CD4-positive, alpha-beta T cell (primary cell): ENCODE measurements at regions of chr20 and their contacts with region 1.

Region 1: DNA sequence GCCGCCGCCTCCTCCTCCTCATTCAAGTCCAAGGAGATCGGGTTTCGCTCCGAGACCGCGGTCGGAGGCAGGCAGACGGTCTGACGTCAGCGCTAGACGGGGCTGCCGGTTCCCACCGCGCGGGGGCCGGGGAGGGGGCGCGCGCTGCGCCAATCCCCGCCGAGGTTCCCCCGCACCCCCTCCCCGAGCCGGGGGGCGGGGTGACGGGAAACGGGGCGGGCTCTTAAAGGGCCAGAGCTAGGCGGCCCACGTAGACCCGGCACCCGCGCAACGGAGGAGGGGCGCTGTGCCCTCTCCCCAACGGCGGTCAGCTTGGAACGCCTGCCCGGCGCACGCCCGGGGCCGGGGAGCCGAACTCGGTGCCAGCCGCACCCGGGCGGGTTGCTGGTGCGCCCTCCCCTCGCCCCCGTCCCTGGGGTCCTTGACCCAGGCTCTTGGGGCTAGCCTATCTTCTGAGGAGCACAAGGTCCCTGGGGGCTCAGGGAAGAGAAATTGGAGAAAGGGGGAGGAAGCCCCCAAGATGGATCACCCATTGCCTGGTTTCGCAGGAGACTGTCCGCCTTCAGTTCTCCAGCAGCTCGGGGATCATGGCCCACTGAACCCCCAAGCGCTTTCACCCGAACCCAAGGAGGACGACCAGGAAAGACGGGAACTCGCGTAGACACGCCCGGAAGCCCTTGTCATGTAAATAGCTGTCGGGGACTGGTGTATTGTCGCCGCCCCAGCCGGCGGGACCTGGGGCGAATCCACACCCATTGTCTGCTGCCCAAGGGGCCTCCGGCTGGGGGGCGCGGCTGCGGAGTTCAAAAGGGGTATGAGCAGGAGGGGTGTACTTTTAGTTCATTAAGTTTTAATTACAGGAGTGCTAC is at the start of gene PMEPA1:
- DNase-seq: peak; percentile 85 to 98 (median 94)
- ATAC-seq: peak; percentile 84
- H3K4me3 ChIP-seq: peak within 1 kb of the TSS; percentile 87
- H3K4me3 Mint-ChIP-seq: peak within 1 kb of the TSS; percentile 97
- H3K27ac ChIP-seq: peak within 1 kb of the TSS; percentile 75 to 84
- H3K27ac Mint-ChIP-seq: peak within 1 kb of the TSS; percentile 95
- H3K4me1 ChIP-seq: peaks cover 32% of the 10 kb centered on the region
- H3K4me1 Mint-ChIP-seq: peaks cover 50% of the 10 kb centered on the region
- H3K27me3 ChIP-seq: peaks cover 0 to 3% of the 10 kb centered on the region in 2 experiments
- H3K27me3 Mint-ChIP-seq: no peaks in the 10 kb centered on the region
- CTCF ChIP-seq: peak; percentile 1
- total RNA-seq, gene PMEPA1: 15.7 to 18.0 TPM

Region 2: DNA sequence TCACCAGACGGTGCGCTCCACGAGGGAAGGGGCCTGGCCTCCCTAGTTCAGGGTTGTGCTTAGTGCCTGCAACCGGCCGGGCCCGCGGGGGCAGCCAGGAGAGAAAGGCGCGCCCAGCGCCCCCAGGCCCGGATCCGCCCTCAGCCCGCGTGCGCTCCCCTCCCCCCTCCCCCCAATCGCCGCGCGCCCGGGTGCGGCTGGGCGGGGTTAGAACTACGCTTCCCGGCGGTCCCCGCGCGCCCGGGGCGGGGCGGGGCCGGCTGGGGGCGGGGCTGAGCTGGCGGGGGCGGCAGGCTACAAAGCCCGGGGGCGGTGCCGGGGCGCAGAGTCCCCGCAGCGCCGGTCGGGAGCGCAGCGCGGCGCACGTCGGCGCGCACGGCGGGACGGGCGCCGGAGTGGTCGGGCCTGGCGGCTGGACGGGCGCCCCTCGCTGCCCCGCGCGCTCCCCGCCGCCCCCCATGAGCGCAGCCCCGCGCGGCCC is 319.1 kb before region 1 on chr20 and contains the start of gene RBM38:
- CTCF ChIA-PET with region 1: no interaction called
- POLR2A ChIA-PET with region 1: interaction called, 3 read pairs
- intact Hi-C with region 1: loop called (anchors 5 kb)
- DNase-seq: peak; percentile 55 to 89 (median 72)
- ATAC-seq: peak; percentile 51
- H3K4me3 ChIP-seq: peak within 1 kb of the TSS; percentile 72
- H3K4me3 Mint-ChIP-seq: peak within 1 kb of the TSS; percentile 99
- H3K27ac ChIP-seq: peak within 1 kb of the TSS; percentile 83 to 88
- H3K27ac Mint-ChIP-seq: peak within 1 kb of the TSS; percentile 96
- H3K4me1 ChIP-seq: peaks cover 63% of the 10 kb centered on the region
- H3K4me1 Mint-ChIP-seq: peaks cover 53% of the 10 kb centered on the region
- H3K27me3 ChIP-seq: no peaks in the 10 kb centered on the region
- H3K27me3 Mint-ChIP-seq: peaks cover 6% of the 10 kb centered on the region
- CTCF ChIP-seq: no peak
- total RNA-seq, gene RBM38: 604 to 645 TPM

Region 3: DNA sequence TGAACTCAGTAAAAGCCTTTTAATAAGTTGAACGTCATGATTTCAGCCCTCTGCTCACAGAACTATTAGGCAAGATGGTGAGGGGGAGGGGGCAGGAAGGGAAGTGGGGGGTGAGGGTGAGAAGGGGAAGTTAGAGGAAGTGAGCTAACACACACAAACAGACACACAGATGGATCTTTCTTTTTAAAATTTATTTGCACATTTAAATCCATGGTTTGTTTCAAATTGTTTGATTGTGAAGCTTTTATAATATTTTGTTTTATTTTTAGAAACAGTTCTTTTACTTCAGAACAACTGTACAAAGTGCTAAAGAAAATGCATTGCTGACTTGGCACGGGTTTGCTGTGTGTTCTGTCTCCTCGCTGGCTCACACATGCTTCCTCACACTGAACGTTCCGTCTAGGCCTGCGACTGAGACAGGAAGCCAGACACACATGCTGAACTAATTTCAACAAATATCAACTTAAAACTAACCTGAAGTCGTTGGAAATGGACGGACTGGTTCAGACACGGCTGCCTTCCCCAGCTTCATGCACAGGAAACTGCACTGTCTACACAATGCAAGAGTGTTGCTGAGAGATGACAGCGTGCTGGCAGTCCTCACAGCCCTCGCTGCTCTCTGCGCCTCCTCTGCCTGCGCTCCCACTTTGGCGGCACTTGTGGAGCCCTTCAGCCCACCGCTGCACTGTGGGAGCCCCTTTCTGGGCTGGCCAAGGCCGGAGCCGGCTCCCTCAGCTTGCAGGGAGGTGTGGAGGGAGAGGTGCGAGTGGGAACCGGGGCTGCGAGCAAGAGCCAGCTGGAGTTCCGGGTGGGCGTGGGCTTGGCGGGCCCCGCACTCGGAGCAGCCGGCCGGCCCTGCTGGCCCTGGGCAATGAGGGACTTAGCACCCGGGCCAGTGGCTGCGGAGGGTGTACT is 81.9 kb before region 1 on chr20:
- CTCF ChIA-PET with region 1: no interaction called
- POLR2A ChIA-PET with region 1: interaction called, 29 read pairs
- intact Hi-C with region 1: loop called (anchors 5 kb)
- DNase-seq: peak in 13 of 14 experiments; percentile 43 to 88 (median 62)
- ATAC-seq: peak; percentile 79
- H3K4me3 ChIP-seq: peak overlapping the region; percentile 40
- H3K4me3 Mint-ChIP-seq: peak overlapping the region; percentile 83
- H3K27ac ChIP-seq: peak overlapping the region; percentile 80 to 88
- H3K27ac Mint-ChIP-seq: peak overlapping the region; percentile 94
- H3K4me1 ChIP-seq: peaks cover 43% of the 10 kb centered on the region
- H3K4me1 Mint-ChIP-seq: peaks cover 90% of the 10 kb centered on the region
- H3K27me3 ChIP-seq: no peaks in the 10 kb centered on the region
- H3K27me3 Mint-ChIP-seq: no peaks in the 10 kb centered on the region
- CTCF ChIP-seq: no peak

Region 4: DNA sequence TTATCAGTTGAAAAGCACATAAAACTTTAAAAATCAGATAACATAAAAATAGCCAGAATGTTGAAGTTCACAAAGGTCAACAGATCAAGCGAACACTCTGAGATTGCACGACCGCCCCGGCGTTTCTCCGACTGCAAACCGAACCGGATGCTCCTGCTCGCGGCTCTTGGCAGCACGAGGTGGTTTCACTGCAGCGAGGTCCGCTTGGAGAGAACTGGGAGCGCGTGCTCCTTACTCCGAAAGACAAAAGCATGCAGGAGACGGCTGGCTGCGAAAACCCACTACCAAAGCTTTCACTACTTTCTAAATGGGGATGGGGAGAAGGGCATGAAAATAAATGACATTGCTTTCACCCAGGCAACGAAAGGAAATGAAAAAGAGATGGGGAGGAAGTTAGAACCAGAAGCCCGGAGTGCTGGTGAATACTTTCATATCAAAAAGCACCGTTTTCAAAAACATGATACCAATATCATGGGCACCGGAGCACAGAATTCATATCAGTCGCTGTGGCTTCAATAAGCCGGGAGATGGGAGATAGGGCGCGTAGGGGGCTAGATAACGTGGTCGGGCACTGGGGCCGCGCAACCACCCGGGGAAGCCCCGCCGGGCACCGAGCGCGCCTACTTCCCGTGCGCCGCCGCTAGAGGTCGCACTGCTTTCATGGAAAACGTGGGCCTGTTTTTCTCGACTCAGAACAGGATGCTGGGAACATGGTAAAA is 526.6 kb after region 1 on chr20:
- CTCF ChIA-PET with region 1: no interaction called
- POLR2A ChIA-PET with region 1: no interaction called
- intact Hi-C with region 1: loop called in 1 of 2 experiments (anchors 1 kb)
- DNase-seq: peak; percentile 66 to 90 (median 82)
- ATAC-seq: peak; percentile 87
- H3K4me3 ChIP-seq: peak overlapping the region; percentile 71
- H3K4me3 Mint-ChIP-seq: peak overlapping the region; percentile 88
- H3K27ac ChIP-seq: peak overlapping the region; percentile 58 to 66
- H3K27ac Mint-ChIP-seq: peak overlapping the region; percentile 77
- H3K4me1 ChIP-seq: peaks cover 9% of the 10 kb centered on the region
- H3K4me1 Mint-ChIP-seq: peaks cover 13% of the 10 kb centered on the region
- H3K27me3 ChIP-seq: no peaks in the 10 kb centered on the region
- H3K27me3 Mint-ChIP-seq: no peaks in the 10 kb centered on the region
- CTCF ChIP-seq: peak; percentile 99

Region 5: DNA sequence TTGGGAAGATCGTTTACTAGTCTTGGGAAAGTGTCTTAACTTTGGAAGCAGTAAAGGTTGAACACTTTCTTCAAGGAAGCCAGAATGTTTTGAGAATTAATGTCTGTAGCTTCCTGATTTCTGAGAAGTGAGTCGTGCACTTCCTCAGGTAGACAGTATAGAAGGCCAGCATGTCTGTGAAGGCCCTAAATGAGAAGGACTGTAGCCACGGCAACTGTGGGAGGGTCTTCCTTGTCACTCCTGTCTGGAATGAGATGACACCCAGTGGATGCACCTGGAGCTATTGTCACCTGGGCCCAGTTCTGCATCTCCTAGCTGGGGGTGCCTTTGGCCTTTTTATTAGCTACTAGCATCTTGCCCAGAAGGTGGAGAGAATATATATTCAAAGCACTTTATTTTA is 949.7 kb after region 1 on chr20:
- CTCF ChIA-PET with region 1: no interaction called
- POLR2A ChIA-PET with region 1: no interaction called
- intact Hi-C with region 1: loop called in 1 of 2 experiments (anchors 5 kb)
- DNase-seq: peak in 5 of 14 experiments; percentile 13 to 40 (median 35)
- ATAC-seq: no peak
- H3K4me3 ChIP-seq: peak overlapping the region; percentile 34
- H3K4me3 Mint-ChIP-seq: peak overlapping the region; percentile 82
- H3K27ac ChIP-seq: peak overlapping the region; percentile 89 to 92
- H3K27ac Mint-ChIP-seq: peak overlapping the region; percentile 98
- H3K4me1 ChIP-seq: peaks cover 55% of the 10 kb centered on the region
- H3K4me1 Mint-ChIP-seq: peaks cover 90% of the 10 kb centered on the region
- H3K27me3 ChIP-seq: no peaks in the 10 kb centered on the region
- H3K27me3 Mint-ChIP-seq: no peaks in the 10 kb centered on the region
- CTCF ChIP-seq: no peak